ENCODE measurements at regions of chr17 and their contacts with region 1.

Region 1: DNA sequence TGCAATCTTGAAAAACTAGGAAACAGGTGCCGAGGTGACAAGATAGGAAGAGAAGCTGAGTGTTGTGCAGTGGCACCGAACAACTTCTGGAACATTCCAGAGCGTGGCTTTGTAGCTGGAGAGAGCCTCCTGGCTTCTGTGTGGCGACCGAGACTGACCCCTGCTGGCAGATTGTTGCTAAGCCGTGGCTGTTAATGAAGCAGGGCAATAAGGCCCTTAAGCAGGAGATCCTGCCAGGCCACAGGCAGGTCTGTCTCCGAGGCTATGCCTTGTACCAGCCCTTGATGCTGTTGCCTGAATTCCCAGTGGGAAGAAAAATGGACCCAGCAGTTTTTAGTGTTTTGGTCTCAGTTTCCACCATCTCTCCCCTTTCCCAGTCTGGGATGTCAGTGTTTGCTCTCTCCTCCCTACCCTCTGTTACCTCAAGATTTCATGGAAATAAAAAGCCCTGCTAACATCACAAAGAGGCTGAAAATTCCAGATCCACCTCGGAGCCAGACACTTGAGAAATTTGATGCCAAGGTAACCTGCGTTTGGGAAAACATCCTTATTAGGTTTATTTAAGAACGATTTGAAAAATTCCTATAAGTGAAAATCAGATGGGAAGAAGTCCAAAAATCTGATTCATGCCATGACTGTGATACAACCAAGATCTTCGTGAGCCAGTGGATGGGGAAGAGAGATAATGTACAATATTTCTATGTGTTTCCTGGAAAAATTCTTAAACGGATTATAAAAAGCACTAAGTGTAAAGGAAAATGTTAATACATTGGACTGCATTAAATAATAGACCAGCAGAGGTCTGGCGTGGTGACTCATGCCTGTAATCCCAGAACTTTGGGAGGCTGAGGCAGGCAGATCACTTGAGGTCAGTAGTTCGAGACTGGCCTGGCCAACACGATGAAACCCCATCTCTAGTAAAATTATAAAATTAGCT is 265.1 kb downstream of the PRKCA start:
- DNase-seq: no peak
- H3K4me3 ChIP-seq: no peak overlapping the region
- H3K27me3 ChIP-seq: no peaks in the 10 kb centered on the region
- CTCF ChIP-seq: peak; percentile 89

Region 2: GRCh38 chr17:66549731-66550207 is 17.7 kb before region 1 on chr17:
- CTCF ChIA-PET with region 1: interaction called, 12 read pairs
- POLR2A ChIA-PET with region 1: no interaction called
- DNase-seq: peak; percentile 80
- H3K4me3 ChIP-seq: no peak overlapping the region
- H3K27me3 ChIP-seq: no peaks in the 10 kb centered on the region
- CTCF ChIP-seq: no peak

Measured in BJ (cell line).